Astrocyte of the cerebellum (primary cell): ENCODE measurements at regions of chr3 and their contacts with region 1.

Region 1: GRCh38 chr3:32488474-32489008 is 14.1 kb downstream of the CMTM6 start:
- DNase-seq: no peak
- H3K4me3 ChIP-seq: no peak overlapping the region
- CTCF ChIP-seq: no peak

Region 2: DNA sequence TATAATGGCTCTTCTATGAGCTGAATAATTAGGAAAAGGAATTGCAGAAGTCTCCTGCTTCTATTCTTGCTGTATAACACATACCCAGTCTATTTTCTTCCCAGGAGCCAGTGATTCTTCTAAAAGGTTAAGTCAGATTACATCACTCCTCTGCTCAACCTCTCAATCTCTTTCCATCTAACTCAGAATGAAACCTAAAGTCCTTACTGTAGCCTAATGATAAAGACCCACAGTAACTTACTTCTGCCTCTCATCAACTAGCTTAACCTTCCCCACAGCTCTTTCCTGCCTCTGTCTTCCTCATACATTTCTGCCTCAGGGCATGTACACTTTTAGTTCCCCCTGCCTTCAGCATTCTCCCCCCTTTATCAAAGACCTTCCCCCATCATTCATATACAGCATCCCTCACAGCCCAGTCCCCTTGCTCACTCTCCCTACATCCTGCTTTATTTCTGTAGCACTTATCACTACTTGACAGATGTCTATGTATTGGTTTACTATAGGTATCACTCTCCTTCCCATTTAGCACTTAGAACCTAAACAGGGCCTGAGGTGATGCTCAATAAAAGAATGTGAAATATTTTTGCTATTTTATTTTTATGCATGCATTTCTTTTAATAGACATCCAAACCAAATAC is 42.6 kb after region 1 on chr3:
- in situ Hi-C with region 1: loop called (anchors 5 kb)
- DNase-seq: no peak
- H3K4me3 ChIP-seq: no peak overlapping the region
- CTCF ChIP-seq: no peak

Region 3: DNA sequence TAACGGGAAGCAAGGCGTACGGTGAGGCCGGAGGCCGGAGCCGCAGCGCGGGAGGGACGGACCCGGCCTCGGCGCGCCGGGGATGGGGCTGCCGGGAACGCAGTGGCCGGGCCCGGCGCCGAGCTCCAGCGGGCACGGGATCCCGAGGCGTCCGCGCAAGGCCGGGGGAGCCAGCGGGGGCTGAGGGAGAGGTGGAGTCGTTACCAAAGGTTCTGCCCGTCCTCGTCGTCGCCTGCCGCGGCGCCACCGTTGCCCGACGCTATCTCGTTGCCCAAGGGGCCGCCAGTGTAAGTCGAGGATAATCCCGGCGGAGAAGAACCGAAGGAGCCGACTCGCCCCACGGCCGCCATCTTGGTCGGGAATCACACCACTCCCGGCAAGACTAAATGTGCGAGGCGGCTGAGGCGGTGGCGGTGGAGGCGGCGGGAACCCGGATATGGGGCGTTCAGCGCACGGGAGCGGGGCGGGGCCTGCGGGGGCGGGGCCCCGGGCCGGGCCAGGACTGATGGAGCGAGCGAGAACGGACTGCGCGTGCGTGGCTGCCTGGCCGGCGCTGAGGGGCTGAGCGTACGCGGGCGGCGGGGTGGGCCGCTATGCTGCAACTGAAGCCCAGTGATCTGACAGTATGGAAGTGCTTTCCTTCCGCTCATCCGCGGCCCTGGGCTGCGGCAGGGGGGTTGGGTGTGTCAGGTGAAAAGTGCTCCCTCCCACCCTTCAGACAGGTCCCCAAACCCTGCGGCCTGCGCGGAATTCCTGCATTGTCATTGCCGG is 82.1 kb after region 1 on chr3 and contains the start of gene DYNC1LI1:
- in situ Hi-C with region 1: no loop called
- DNase-seq: peak; percentile 77
- H3K4me3 ChIP-seq: peak within 1 kb of the TSS; percentile 89
- CTCF ChIP-seq: no peak